OCI-LY7 (cell line): ENCODE measurements at regions of chr3 and their contacts with region 1.

Region 1: GRCh38 chr3:62723166-62723913 is 151.9 kb downstream of the CADPS start:
- DNase-seq: peak; percentile 82
- H3K4me3 ChIP-seq: peak overlapping the region; percentile 58
- H3K27ac ChIP-seq: peak overlapping the region; percentile 85
- H3K4me1 ChIP-seq: peaks cover 73% of the 10 kb centered on the region
- CTCF ChIP-seq: no peak

Region 2: DNA sequence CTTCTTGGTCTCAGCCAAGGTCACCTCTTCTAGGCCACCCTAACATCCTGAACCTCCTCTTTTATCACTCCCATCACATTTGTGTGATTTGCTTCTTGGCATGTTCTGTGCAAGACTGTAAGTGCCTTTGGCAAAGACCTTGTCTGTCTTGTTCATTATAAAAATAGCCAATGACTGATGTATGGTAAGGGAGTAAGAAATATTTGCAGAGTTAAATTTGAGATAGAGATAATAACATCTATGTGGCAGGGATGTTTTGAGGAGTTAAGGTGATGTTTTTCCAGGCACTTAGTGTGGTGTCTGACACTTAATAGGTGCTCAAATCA is 50.4 kb before region 1 on chr3:
- CTCF ChIA-PET with region 1: interaction called, 7 read pairs
- POLR2A ChIA-PET with region 1: interaction called, 12 read pairs
- intact Hi-C with region 1: no loop called
- DNase-seq: no peak
- H3K4me3 ChIP-seq: no peak overlapping the region
- H3K27ac ChIP-seq: peak overlapping the region; percentile 6
- H3K4me1 ChIP-seq: peaks cover 62% of the 10 kb centered on the region
- CTCF ChIP-seq: no peak

Region 3: GRCh38 chr3:62737449-62737848 is 14.1 kb after region 1 on chr3:
- CTCF ChIA-PET with region 1: interaction called, 4 read pairs
- POLR2A ChIA-PET with region 1: interaction called, 22 read pairs
- intact Hi-C with region 1: no loop called
- DNase-seq: no peak
- H3K4me3 ChIP-seq: no peak overlapping the region
- H3K27ac ChIP-seq: no peak overlapping the region
- H3K4me1 ChIP-seq: peaks cover 5% of the 10 kb centered on the region
- CTCF ChIP-seq: no peak

Region 4: GRCh38 chr3:62798000-62798399 is 74.7 kb after region 1 on chr3:
- CTCF ChIA-PET with region 1: interaction called, 3 read pairs
- POLR2A ChIA-PET with region 1: interaction called, 117 read pairs
- intact Hi-C with region 1: loop called (anchors 2 kb)
- DNase-seq: no peak
- H3K4me3 ChIP-seq: no peak overlapping the region
- H3K27ac ChIP-seq: peak overlapping the region; percentile 88
- H3K4me1 ChIP-seq: peaks cover 99% of the 10 kb centered on the region
- CTCF ChIP-seq: no peak

Region 5: DNA sequence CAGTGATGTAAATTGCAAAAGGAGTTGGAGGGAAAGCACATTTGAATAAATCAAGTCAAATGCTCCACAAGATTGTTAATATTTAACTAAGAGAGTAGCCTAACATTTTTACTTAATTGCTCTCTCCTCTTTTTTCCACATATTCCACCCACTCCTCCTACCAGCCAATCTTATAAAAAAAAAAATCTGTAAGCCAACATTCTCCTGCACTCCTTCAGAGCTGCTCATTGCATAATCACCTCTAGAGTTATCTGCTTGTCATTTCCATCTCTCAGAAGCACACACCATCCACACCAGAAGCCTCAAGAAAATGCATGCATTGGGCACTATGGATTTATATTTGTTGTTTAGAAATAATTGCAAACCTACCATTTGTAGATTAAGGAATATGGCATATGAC is 87.8 kb after region 1 on chr3:
- CTCF ChIA-PET with region 1: interaction called, 5 read pairs
- POLR2A ChIA-PET with region 1: interaction called, 17 read pairs
- intact Hi-C with region 1: no loop called
- DNase-seq: no peak
- H3K4me3 ChIP-seq: no peak overlapping the region
- H3K27ac ChIP-seq: peak overlapping the region; percentile 58
- H3K4me1 ChIP-seq: peaks cover 96% of the 10 kb centered on the region
- CTCF ChIP-seq: no peak

Region 6: DNA sequence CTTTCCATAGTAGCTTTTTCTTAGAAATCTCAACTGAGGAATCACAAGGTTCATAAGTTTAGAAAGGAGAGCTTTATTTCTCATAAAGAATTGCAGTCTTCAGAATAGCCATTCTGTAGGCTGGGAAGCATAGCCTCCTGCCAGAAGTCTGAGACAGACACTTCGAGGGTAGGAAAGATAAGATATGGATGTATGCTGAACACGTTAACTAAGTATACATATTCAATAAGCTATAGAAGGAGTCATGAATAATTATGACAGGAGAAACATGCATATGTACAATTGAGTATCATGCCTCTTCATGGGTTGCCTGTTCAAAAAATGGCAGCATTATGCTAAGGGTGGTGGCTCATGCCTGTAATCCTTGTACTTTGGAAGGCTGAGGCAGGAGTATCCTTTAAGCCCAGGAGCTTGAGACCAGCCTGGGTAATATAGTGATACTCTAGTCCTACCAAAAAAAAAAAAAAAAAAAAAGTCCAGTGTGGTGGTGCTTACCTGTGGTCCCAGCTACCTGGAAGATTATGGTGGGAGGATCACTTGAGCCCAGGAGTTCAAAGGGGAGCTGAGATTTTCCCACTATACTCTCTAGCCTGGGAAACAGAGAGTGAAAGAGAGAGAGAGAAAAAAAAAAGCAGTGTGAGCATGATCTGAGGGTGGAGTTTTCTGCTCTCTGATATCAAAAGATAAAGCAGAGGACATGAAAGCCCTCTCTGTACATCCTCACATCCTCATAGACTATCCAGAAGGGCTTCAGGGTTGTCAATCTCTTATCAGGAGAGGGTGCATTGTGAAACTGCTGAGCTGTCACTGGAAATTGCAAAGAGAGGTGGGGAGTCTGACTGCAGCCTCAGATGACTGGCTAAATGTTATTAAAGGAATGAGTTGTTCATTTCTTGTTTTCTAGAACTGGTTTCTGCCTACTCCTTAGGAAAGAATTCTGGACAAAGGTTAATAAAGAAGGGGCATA is 175.5 kb after region 1 on chr3:
- CTCF ChIA-PET with region 1: no interaction called
- POLR2A ChIA-PET with region 1: no interaction called
- intact Hi-C with region 1: no loop called
- DNase-seq: no peak
- H3K4me3 ChIP-seq: no peak overlapping the region
- H3K27ac ChIP-seq: no peak overlapping the region
- H3K4me1 ChIP-seq: no peaks in the 10 kb centered on the region
- CTCF ChIP-seq: no peak